ENCODE measurements at regions of chr9 and their contacts with region 1.

Region 1: DNA sequence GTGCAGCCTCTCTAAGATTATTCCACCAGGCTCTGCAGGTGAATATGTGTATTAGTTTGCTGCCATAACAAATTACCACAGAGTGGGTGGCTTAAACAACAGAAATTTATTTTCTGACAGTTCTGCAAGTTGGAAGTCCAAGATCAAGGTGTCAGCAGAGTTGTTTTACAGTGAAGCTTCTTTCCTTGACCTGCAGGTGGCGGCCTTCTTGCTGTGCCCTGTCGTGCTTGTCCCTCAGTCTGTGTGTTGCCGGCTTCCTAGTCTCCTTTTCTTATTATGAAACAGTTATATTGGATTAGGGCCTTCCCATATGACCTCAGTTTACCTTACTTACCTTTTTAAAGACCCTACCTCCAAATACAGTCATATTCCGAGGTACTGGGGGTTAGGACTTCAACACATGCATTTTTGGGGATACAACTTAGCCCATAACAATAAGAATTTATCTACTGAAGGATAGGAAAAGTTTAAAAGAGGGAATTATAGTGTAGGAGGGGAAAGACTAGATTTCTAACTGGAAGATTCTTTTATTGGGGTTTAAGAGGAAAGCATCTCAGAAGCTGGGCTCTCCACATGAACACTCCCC is 97.4 kb downstream of the OSTF1 start:
- DNase-seq: peak; percentile 41
- H3K4me3 ChIP-seq: no peak overlapping the region
- H3K27ac ChIP-seq: no peak overlapping the region
- H3K4me1 ChIP-seq: peaks cover 5% of the 10 kb centered on the region
- H3K27me3 ChIP-seq: no peaks in the 10 kb centered on the region
- CTCF ChIP-seq: peak; percentile 60 to 66
- POLR2A ChIP-seq: no peak

Region 2: GRCh38 chr9:74672237-74672636 is 513.4 kb before region 1 on chr9:
- CTCF ChIA-PET with region 1: no interaction called
- POLR2A ChIA-PET with region 1: no interaction called
- dilution Hi-C with region 1: no loop called
- intact Hi-C with region 1: no loop called
- DNase-seq: no peak
- H3K4me3 ChIP-seq: no peak overlapping the region
- H3K27ac ChIP-seq: no peak overlapping the region
- H3K4me1 ChIP-seq: no peaks in the 10 kb centered on the region
- H3K27me3 ChIP-seq: no peaks in the 10 kb centered on the region
- CTCF ChIP-seq: no peak
- POLR2A ChIP-seq: no peak

Region 3: DNA sequence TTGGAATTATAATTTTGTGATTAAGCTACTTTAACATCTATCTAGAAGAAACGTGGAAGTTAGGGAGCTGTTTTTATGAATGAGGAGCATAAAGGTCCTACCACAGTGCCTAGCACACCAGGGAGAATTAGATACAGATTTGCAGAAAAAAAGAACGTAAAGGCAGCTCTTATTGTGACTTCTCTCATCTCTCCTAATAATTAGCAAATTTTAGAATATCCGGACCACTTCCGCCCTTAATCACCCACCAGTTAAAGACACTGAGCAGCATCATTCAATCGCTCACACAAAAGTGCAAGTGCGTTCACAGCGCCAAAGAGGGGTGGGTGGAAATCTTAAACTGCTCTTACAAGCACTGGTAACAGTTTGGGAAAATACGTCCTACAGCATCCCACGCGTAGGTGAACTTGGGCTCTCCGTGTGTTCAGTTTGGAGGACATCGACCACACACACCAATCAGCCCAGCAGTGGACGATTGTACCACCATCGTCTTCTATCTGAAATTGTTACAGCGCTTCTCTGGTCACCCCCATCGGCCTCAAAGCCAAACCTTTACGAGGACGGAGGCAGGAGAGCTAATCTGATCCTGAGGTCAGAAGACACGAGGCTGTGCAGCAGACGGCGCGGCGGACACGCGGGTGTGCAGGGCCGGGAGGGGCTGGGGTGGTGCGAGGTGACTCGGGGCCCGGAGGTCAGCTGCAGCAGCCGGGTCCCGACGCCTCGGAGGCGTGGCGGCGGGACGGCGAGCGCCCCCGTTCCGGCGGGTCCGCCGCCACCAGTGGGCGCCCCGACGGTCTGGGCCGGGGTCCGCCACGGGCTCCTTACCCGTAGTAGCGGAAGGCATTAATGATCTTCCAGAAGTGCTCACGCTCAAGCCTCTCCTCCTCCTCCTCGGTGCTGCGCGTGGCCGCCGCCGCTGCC is 158.2 kb before region 1 on chr9:
- CTCF ChIA-PET with region 1: interaction called, 6 read pairs
- POLR2A ChIA-PET with region 1: no interaction called
- dilution Hi-C with region 1: no loop called
- intact Hi-C with region 1: loop called (anchors 5 kb)
- DNase-seq: peak; percentile 53
- H3K4me3 ChIP-seq: peak overlapping the region; percentile 15 to 68 (median 61)
- H3K27ac ChIP-seq: peak overlapping the region; percentile 43
- H3K4me1 ChIP-seq: peaks cover 9% of the 10 kb centered on the region
- H3K27me3 ChIP-seq: peaks cover 1 to 2% of the 10 kb centered on the region in 2 experiments
- CTCF ChIP-seq: peak in 1 of 2 donors; percentile 21
- POLR2A ChIP-seq: peak; percentile 10

Region 4: GRCh38 chr9:75108555-75108954 is 77.1 kb before region 1 on chr9:
- CTCF ChIA-PET with region 1: interaction called, 4 read pairs
- POLR2A ChIA-PET with region 1: no interaction called
- dilution Hi-C with region 1: no loop called
- intact Hi-C with region 1: loop called (anchors 5 kb)
- DNase-seq: peak; percentile 80
- H3K4me3 ChIP-seq: peak overlapping the region in 1 of 3 experiments; percentile 23
- H3K27ac ChIP-seq: peak overlapping the region; percentile 73
- H3K4me1 ChIP-seq: peaks cover 33% of the 10 kb centered on the region
- H3K27me3 ChIP-seq: no peaks in the 10 kb centered on the region
- CTCF ChIP-seq: no peak
- POLR2A ChIP-seq: peak; percentile 26

Region 5: DNA sequence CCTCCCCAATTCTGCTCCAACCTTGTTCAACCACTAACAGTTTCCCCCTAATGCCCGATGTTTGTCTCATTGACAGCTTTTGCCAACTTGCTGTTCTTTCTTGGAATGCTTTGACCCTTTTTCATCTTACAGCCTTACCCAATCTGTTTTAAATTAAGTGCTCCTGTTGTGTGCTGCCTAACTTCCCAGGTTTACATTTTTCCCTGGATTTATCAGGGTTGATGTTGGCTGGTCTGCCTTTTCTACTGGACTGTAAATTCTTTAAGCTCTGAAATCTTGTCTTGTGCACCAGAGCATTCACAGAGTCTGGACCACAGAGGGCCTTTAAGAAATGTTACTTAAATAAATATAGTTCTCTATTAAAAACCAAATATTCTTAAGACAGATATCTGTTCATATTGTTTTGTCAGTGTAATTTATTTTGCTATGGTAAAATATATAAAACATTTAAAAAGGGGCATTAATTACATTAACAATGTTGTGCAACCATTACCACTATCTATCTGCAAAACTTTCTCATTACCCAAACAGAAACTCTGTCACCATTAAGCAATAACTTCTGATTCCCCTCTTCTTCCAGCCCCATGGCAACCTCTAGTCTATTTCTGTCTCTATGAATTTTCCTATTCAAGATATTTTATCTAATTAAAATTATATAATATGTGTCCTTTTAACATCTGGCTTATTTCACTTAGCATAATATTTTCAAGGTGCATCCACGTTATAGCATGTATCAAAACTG is 24.4 kb before region 1 on chr9:
- CTCF ChIA-PET with region 1: interaction called, 11 read pairs
- POLR2A ChIA-PET with region 1: no interaction called
- dilution Hi-C with region 1: no loop called
- intact Hi-C with region 1: no loop called
- DNase-seq: no peak
- H3K4me3 ChIP-seq: no peak overlapping the region
- H3K27ac ChIP-seq: no peak overlapping the region
- H3K4me1 ChIP-seq: no peaks in the 10 kb centered on the region
- H3K27me3 ChIP-seq: no peaks in the 10 kb centered on the region
- CTCF ChIP-seq: no peak
- POLR2A ChIP-seq: no peak

Region 6: DNA sequence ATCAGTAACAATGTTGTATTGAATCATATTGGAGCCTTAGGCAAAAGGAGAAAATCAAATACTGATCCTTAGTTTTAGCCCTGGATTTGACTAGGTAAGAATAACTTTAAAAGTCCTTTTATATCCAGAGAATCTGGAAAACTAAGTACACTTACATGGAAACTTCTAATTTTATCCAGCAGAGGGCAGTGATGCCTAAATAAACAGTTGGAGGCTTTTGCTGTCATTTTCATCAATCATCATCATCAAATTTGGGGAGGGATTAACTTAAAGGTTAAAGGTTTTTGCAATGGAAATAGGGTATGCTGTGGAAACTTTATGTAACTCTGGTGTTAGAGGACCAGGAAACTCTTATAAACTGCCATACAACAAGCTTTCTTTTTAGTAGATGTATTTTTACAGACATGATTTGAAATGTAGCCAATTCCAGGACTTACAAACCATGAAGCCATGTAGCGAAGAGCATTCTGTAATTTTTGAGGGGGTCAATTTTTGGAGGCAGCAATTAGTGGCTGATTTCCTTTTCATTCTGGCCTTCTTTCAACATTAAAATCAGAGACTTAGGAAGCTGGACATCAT is 15.3 kb after region 1 on chr9:
- CTCF ChIA-PET with region 1: interaction called, 36 read pairs
- POLR2A ChIA-PET with region 1: no interaction called
- dilution Hi-C with region 1: no loop called
- intact Hi-C with region 1: no loop called
- DNase-seq: peak; percentile 62
- H3K4me3 ChIP-seq: no peak overlapping the region
- H3K27ac ChIP-seq: no peak overlapping the region
- H3K4me1 ChIP-seq: no peaks in the 10 kb centered on the region
- H3K27me3 ChIP-seq: peaks cover 0 to 3% of the 10 kb centered on the region in 2 experiments
- CTCF ChIP-seq: peak in 1 of 2 donors; percentile 37
- POLR2A ChIP-seq: no peak

Region 7: GRCh38 chr9:75582870-75583269 is 397.2 kb after region 1 on chr9:
- CTCF ChIA-PET with region 1: no interaction called
- POLR2A ChIA-PET with region 1: no interaction called
- dilution Hi-C with region 1: no loop called
- intact Hi-C with region 1: no loop called
- DNase-seq: no peak
- H3K4me3 ChIP-seq: no peak overlapping the region
- H3K27ac ChIP-seq: no peak overlapping the region
- H3K4me1 ChIP-seq: no peaks in the 10 kb centered on the region
- H3K27me3 ChIP-seq: no peaks in the 10 kb centered on the region
- CTCF ChIP-seq: no peak
- POLR2A ChIP-seq: no peak

Measured in endothelial cell of umbilical vein (primary cell).